ENCODE measurements at regions of chr10 and their contacts with region 1.

Region 1: GRCh38 chr10:114470956-114471905 is 66.9 kb upstream of the AFAP1L2 start:
- DNase-seq: peak; percentile 41 to 62 (median 60)
- ATAC-seq: peak; percentile 90
- H3K4me3 ChIP-seq: no peak overlapping the region
- H3K27ac ChIP-seq: no peak overlapping the region
- H3K4me1 ChIP-seq: no peaks in the 10 kb centered on the region
- H3K27me3 ChIP-seq: peaks cover 0 to 3% of the 10 kb centered on the region in 2 experiments; a peak in 1 of 5 replicates
- CTCF ChIP-seq: peak; percentile 63 to 67 (median 65)
- EP300 ChIP-seq: no peak
- POLR2A ChIP-seq: no peak
- RAD21 ChIP-seq: peak; percentile 35 to 47; a peak in 2 of 4 replicates

Region 2: GRCh38 chr10:114550756-114551635 is 79.8 kb after region 1 on chr10:
- CTCF ChIA-PET with region 1: no interaction called
- POLR2A ChIA-PET with region 1: no interaction called
- in situ Hi-C with region 1: no loop called
- intact Hi-C with region 1: loop called (anchors 2 kb)
- DNase-seq: peak in 1 of 4 experiments; percentile 5
- ATAC-seq: no peak
- H3K4me3 ChIP-seq: no peak overlapping the region
- H3K27ac ChIP-seq: no peak overlapping the region
- H3K4me1 ChIP-seq: no peaks in the 10 kb centered on the region
- H3K27me3 ChIP-seq: no peaks in the 10 kb centered on the region
- CTCF ChIP-seq: peak in 2 of 3 experiments; percentile 29 to 39; a peak in 2 of 6 replicates
- EP300 ChIP-seq: no peak
- POLR2A ChIP-seq: no peak
- RAD21 ChIP-seq: peak; percentile 37 to 54

Region 3: GRCh38 chr10:114694752-114695151 is 223.5 kb after region 1 on chr10:
- CTCF ChIA-PET with region 1: no interaction called
- POLR2A ChIA-PET with region 1: no interaction called
- in situ Hi-C with region 1: no loop called
- intact Hi-C with region 1: loop called (anchors 2 kb)
- DNase-seq: peak; percentile 29 to 38 (median 36)
- ATAC-seq: peak; percentile 64; the same call in 2 of the 3 replicates
- H3K4me3 ChIP-seq: no peak overlapping the region
- H3K27ac ChIP-seq: no peak overlapping the region
- H3K4me1 ChIP-seq: no peaks in the 10 kb centered on the region
- H3K27me3 ChIP-seq: no peaks in the 10 kb centered on the region; a peak in 1 of 5 replicates
- CTCF ChIP-seq: peak; percentile 49 to 62 (median 52)
- EP300 ChIP-seq: no peak
- POLR2A ChIP-seq: no peak
- RAD21 ChIP-seq: peak in 1 of 2 experiments; percentile 53; a peak in 2 of 4 replicates

Region 4: DNA sequence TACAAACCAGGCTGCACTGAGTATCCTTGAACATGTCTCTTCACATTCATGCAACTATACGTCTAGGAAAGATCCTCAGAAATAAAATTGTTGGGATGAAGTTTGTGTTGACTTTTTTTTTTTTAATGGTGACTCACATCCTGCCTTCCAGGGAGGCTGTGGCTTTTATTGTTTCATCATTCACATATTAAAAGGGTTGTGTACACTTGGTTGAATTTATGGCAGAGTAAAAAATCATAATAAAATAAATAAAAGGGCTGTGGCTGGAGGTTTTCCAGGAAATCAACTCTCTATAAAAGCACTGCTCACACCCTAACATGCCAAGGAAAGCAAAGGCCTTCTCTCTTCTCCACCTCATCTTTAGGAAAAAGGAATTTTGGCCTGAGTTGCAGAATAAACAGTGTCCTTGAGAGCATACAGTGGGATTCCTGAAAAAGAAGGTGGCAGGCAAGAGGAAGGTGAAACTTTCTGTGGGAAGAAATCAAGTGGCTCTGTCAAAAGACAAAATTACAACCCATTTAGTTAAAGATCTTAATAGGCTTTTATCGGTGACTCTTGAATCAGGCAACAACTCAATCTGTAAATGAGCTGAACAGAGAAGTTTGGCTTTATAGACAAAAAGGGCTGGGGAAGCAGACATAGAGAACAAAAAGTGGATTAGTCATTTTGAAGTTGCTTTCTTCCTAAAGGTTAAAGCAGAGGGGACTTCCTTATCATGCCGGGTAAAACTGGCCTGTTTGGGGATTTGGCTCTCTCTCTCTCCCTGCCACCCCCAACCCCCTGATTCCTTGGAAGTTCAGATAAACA is 308.8 kb after region 1 on chr10:
- CTCF ChIA-PET with region 1: no interaction called
- POLR2A ChIA-PET with region 1: no interaction called
- in situ Hi-C with region 1: no loop called
- intact Hi-C with region 1: loop called (anchors 10 kb)
- DNase-seq: no peak
- ATAC-seq: no peak
- H3K4me3 ChIP-seq: no peak overlapping the region
- H3K27ac ChIP-seq: no peak overlapping the region
- H3K4me1 ChIP-seq: no peaks in the 10 kb centered on the region
- H3K27me3 ChIP-seq: no peaks in the 10 kb centered on the region
- CTCF ChIP-seq: no peak
- EP300 ChIP-seq: no peak
- POLR2A ChIP-seq: no peak
- RAD21 ChIP-seq: no peak

Measured in K562 (cell line).